ENCODE measurements at regions of chr5 and their contacts with region 1.

Region 1: GRCh38 chr5:39187831-39188731 is 31.3 kb downstream of the FYB1 start:
- DNase-seq: no peak
- ATAC-seq: no peak
- H3K4me3 ChIP-seq: no peak overlapping the region
- H3K4me3 Mint-ChIP-seq: no peak overlapping the region
- H3K27ac ChIP-seq: no peak overlapping the region
- H3K27ac Mint-ChIP-seq: no peak overlapping the region
- H3K4me1 ChIP-seq: peaks cover 27% of the 10 kb centered on the region in 2 donors
- H3K4me1 Mint-ChIP-seq: peaks cover 37% of the 10 kb centered on the region
- H3K27me3 ChIP-seq: no peaks in the 10 kb centered on the region
- H3K27me3 Mint-ChIP-seq: no peaks in the 10 kb centered on the region
- CTCF ChIP-seq: no peak

Region 2: GRCh38 chr5:38780950-38781349 is 407.1 kb before region 1 on chr5:
- CTCF ChIA-PET with region 1: no interaction called
- POLR2A ChIA-PET with region 1: no interaction called
- intact Hi-C with region 1: no loop called
- DNase-seq: no peak
- ATAC-seq: no peak
- H3K4me3 ChIP-seq: no peak overlapping the region
- H3K4me3 Mint-ChIP-seq: no peak overlapping the region
- H3K27ac ChIP-seq: no peak overlapping the region
- H3K27ac Mint-ChIP-seq: no peak overlapping the region
- H3K4me1 ChIP-seq: no peaks in the 10 kb centered on the region
- H3K4me1 Mint-ChIP-seq: no peaks in the 10 kb centered on the region
- H3K27me3 ChIP-seq: no peaks in the 10 kb centered on the region
- H3K27me3 Mint-ChIP-seq: no peaks in the 10 kb centered on the region
- CTCF ChIP-seq: no peak

Region 3: DNA sequence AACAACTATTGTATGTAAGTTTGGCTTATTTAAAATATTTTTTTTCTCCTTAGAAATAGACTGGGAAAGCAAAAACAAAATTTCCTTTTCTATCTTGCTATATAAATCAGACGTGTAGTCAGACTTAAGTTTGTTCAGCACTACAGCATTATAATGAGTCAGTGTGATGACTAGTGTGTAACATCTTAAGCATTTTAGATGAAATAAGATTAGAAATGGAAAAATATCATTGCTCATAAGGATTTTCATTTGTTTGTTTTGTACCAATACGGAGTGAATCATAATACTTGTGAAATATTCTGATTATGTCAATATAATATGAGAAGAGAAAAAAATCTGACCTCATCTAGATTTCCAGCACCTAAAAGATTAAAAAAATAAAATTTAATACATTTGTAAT is 49.2 kb before region 1 on chr5:
- CTCF ChIA-PET with region 1: no interaction called
- POLR2A ChIA-PET with region 1: no interaction called
- intact Hi-C with region 1: no loop called
- DNase-seq: no peak
- ATAC-seq: no peak
- H3K4me3 ChIP-seq: no peak overlapping the region
- H3K4me3 Mint-ChIP-seq: no peak overlapping the region
- H3K27ac ChIP-seq: no peak overlapping the region
- H3K27ac Mint-ChIP-seq: no peak overlapping the region
- H3K4me1 ChIP-seq: no peaks in the 10 kb centered on the region
- H3K4me1 Mint-ChIP-seq: no peaks in the 10 kb centered on the region
- H3K27me3 ChIP-seq: no peaks in the 10 kb centered on the region
- H3K27me3 Mint-ChIP-seq: peaks cover 4% of the 10 kb centered on the region
- CTCF ChIP-seq: no peak

Region 4: DNA sequence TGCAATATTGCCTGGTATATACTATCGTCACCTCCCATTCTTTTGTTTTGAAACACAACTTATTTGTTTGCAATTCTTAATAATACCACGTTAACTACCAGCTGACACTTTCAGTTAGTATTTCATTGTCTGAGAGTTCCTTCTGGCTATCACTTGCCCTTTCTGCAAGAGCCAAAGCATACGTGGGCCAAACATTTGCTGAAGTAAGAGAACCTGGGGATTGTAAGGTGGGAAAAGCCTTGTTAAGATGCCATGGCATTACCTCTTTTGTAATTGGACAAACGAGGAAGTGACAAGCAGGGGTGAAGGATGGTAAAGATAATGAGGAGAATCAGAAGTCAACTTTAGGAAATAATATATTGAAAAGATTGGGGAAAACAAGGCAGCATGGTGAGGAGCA is 16.4 kb before region 1 on chr5:
- CTCF ChIA-PET with region 1: no interaction called
- POLR2A ChIA-PET with region 1: no interaction called
- intact Hi-C with region 1: loop called (anchors 2 kb)
- DNase-seq: no peak
- ATAC-seq: no peak
- H3K4me3 ChIP-seq: no peak overlapping the region
- H3K4me3 Mint-ChIP-seq: no peak overlapping the region
- H3K27ac ChIP-seq: no peak overlapping the region
- H3K27ac Mint-ChIP-seq: no peak overlapping the region
- H3K4me1 ChIP-seq: peaks cover 13 to 19% of the 10 kb centered on the region in 2 donors
- H3K4me1 Mint-ChIP-seq: peaks cover 23% of the 10 kb centered on the region
- H3K27me3 ChIP-seq: no peaks in the 10 kb centered on the region
- H3K27me3 Mint-ChIP-seq: no peaks in the 10 kb centered on the region
- CTCF ChIP-seq: no peak